PC-9 (cell line): ENCODE measurements at regions of chr5 and their contacts with region 1.

Region 1: DNA sequence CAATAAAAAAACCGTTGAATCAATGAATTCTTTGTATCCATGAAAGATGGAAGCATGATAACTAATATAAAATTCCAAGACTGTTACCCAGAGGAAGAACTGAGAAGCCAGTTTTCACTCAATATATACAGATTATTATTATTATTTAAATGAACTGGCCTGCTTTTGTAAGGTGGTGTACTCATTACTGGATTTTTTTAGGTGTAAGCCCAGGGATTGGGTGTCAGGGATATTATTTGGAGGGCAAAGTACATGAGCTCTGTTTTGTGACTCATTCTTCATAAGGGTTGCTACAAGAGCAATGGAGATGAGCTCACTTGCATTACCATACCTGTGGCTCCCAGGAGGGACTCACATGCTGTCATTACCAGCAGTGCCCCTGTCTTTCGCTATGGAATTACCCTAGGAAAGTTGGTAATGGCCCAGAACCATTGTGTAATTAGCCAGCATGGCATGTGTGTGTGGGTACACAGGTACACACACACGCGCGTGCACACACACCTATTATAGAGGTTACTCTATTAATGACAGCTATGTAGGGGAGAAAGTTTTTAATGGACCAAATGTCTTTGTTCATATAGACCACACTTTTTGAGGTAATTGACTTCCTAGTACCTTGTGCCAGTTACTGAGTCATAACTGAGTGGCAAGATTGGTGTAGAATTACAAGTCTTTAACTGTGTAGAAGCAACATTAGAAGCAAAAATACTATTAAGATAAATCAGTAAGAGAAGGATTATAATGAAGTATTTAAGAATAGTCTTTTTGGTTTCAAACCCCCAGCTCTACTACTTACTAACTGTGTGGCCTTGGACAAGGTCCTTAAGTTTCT is 143.4 kb downstream of the GDNF start:
- DNase-seq: peak; percentile 65 to 88
- H3K4me3 ChIP-seq: no peak overlapping the region
- H3K27ac ChIP-seq: peak overlapping the region; percentile 75
- H3K4me1 ChIP-seq: peaks cover 28% of the 10 kb centered on the region
- H3K27me3 ChIP-seq: no peaks in the 10 kb centered on the region
- CTCF ChIP-seq: no peak

Region 2: GRCh38 chr5:37722236-37723146 is 26.1 kb after region 1 on chr5:
- CTCF ChIA-PET with region 1: interaction called, 7 read pairs
- POLR2A ChIA-PET with region 1: no interaction called
- intact Hi-C with region 1: loop called (anchors 1 kb)
- DNase-seq: peak; percentile 32 to 93
- H3K4me3 ChIP-seq: no peak overlapping the region
- H3K27ac ChIP-seq: no peak overlapping the region
- H3K4me1 ChIP-seq: peaks cover 29% of the 10 kb centered on the region
- H3K27me3 ChIP-seq: no peaks in the 10 kb centered on the region
- CTCF ChIP-seq: no peak

Region 3: DNA sequence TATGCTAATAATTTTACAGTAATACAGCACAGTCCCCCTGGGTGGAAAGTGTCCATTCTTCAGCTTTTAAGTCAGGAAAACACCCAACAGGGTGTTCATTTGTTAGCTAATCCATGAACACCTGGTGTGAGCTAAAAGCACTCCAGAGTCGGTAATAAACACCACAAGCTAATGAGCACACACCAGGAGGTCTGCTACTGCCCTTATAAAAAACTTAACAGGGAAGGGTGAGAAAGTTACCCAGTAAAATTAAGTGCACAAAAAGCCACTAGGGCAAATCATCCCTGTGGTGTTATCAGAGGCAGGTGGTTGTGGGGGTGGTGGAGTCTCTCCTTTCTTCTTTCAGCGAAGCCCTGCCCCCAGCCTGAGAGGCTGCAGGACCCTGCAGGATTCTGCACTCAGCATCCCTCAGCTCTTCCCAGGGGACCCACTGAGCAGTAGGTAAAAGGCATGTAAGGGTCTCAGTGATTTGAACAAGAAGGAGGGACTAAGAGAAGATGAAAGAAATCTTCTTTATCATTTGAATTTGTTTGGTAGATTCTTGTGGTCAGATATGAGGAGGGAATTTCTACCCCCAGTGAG is 129.0 kb after region 1 on chr5:
- CTCF ChIA-PET with region 1: no interaction called
- POLR2A ChIA-PET with region 1: no interaction called
- intact Hi-C with region 1: no loop called
- DNase-seq: no peak
- H3K4me3 ChIP-seq: no peak overlapping the region
- H3K27ac ChIP-seq: no peak overlapping the region
- H3K4me1 ChIP-seq: no peaks in the 10 kb centered on the region
- H3K27me3 ChIP-seq: peaks cover 8% of the 10 kb centered on the region; the same call in 1 of the 2 replicates
- CTCF ChIP-seq: no peak